Cardiac septum (tissue), 1 donor: ENCODE measurements at regions of chr14 and their contacts with region 1.

Region 1: GRCh38 chr14:95291859-95292542 is 27.7 kb downstream of the CLMN start:
- DNase-seq: peak; percentile 81

Region 2: GRCh38 chr14:95424529-95424928 is 132.5 kb after region 1 on chr14:
- intact Hi-C with region 1: loop called (anchors 10 kb)
- DNase-seq: no peak